Dorsolateral prefrontal cortex (tissue), 120 donors: ENCODE measurements at regions of chr7 and their contacts with region 1.

Region 1: DNA sequence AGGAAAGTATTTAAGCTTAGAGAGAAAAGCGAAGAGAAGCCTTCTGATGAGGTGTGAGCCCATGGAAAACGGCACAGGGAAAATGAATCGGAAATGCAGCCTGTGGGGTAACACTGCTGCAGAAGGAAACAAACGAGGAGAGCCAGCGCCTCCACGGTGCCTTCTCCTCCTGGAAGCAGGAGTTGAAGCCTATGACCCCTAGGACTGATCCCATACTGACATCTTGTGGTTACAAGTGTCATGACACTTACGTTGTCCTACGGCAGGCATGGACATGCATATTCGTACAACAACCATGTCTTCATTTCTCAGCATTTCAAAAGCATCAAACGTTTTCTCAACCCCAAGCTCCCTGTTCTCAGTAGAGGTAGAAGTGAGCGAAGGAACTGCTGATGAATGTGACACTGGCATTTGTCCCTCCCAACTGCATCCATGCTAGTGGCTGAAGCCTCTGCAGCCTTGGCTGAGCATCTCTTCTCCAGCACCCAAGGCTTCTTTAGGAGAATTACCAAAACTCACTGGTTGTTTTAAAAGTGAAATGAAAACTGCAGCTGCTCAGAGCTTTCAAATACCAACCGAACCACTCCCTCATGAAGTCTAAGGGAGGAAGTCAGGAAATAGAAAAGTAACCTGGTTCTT is 160.2 kb downstream of the JAZF1 start:
- DNase-seq: peak; percentile 46 to 79 (median 74)
- H3K4me3 ChIP-seq: peak overlapping the region in 15 of 59 donors; percentile 2 to 39 (median 23)
- H3K27ac ChIP-seq: peak overlapping the region in 41 of 59 donors; percentile 0 to 69 (median 37)
- H3K27me3 ChIP-seq: no peaks in the 10 kb centered on the region
- CTCF ChIP-seq: peak; percentile 64 to 99 (median 94)

Region 2: DNA sequence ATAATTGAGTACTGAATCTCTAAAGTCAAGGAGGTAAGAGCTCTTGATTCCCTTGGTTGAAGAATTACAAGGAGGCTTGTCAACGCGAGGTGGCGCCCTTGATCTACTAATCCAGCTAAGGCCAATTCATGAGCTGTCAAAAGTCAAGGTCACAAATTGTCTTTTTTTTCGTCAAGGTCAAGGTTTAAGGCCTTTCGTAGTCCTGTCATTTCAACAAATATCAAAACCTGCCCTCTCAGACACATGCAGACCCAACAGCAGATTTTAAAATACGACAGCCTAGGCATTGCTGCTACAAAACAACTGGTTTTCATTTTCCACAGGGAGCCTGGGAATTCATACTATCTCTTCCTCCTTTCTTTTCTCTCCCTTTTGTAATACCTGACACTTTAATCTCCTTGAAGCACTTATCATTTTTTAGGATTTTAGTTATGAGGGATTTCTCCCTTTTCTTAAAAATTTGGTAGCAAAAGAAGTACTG is 824.1 kb before region 1 on chr7:
- intact Hi-C with region 1: loop called (anchors 5 to 10 kb)
- DNase-seq: peak; percentile 57 to 93 (median 80)
- H3K4me3 ChIP-seq: no peak overlapping the region
- H3K27ac ChIP-seq: no peak overlapping the region
- H3K27me3 ChIP-seq: peaks cover 13 to 98% (median 94%) of the 10 kb centered on the region in 45 donors
- CTCF ChIP-seq: peak; percentile 47 to 93 (median 78)

Region 3: GRCh38 chr7:27784393-27785053 is 235.9 kb before region 1 on chr7:
- intact Hi-C with region 1: loop called in 1 of 2 experiments (anchors 5 kb)
- DNase-seq: no peak
- H3K4me3 ChIP-seq: no peak overlapping the region
- H3K27ac ChIP-seq: no peak overlapping the region
- H3K27me3 ChIP-seq: no peaks in the 10 kb centered on the region
- CTCF ChIP-seq: peak; percentile 38 to 74 (median 61)

Region 4: DNA sequence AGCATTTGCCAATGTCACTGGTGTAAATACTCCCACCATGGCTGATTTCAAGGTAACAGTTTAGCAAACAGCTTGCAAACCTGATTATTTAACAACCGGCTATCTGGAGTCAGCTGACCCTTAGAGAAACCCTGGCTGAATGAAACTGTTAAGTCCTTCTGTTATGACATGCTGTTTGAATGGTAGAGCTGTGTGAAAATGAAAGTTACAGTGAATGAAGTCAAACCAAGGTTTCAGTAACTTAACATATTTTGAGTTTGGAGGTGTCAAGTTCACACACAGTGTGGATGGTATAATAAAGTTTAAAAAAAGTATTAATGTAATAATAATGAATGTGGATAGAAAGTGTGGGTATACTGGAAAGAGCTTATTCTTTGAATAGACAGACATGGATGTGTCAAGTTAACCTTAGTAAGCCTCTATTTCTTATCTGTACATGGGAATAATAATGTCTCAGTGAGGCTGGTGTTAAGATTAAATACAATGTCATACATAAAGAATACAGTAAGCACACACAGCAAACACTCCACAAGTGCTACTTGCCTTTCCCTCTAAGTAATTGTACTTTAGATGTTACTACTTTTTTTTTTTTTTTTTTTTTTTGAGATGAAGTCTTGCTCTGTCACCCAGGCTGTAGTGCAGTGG is 130.1 kb before region 1 on chr7:
- intact Hi-C with region 1: no loop called
- DNase-seq: no peak
- H3K4me3 ChIP-seq: no peak overlapping the region
- H3K27ac ChIP-seq: no peak overlapping the region
- H3K27me3 ChIP-seq: no peaks in the 10 kb centered on the region
- CTCF ChIP-seq: no peak

Region 5: GRCh38 chr7:27947586-27948278 is 72.7 kb before region 1 on chr7:
- intact Hi-C with region 1: loop called in 1 of 2 experiments (anchors 2 kb)
- DNase-seq: peak in 3 of 10 donors; percentile 37 to 65 (median 58)
- H3K4me3 ChIP-seq: peak overlapping the region in 4 of 59 donors; percentile 9 to 36 (median 13)
- H3K27ac ChIP-seq: peak overlapping the region in 24 of 59 donors; percentile 4 to 74 (median 25)
- H3K27me3 ChIP-seq: no peaks in the 10 kb centered on the region
- CTCF ChIP-seq: peak in 28 of 56 donors; percentile 10 to 56 (median 28)